Calu3 (cell line): ENCODE measurements at regions of chr11 and their contacts with region 1.

Region 1: GRCh38 chr11:36469063-36469462 is 41.0 kb downstream of the TRAF6 start:
- DNase-seq: no peak
- H3K4me3 Mint-ChIP-seq: no peak overlapping the region
- H3K27ac Mint-ChIP-seq: no peak overlapping the region
- H3K4me1 Mint-ChIP-seq: peaks cover 8% of the 10 kb centered on the region
- H3K27me3 Mint-ChIP-seq: peaks cover 15% of the 10 kb centered on the region
- CTCF ChIP-seq: no peak

Region 2: DNA sequence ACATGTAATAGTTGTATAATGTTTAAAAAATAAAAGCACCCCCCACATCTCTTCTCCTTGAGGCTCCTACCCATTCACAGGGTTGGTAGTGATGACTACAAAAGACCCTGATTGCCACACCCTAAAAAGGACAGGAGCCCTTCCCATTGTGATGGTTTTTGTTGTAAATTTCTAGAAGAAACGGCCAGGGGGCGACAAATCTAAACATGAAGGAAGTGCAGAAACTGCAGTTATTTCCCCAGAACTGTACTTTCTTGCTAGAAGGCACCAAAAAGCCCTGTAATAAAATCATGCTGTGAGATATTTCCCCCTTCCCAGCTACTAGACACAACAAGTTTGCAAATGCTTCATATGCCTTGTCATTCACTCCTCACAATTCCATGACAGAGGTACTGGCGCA is 162.2 kb before region 1 on chr11:
- CTCF ChIA-PET with region 1: no interaction called
- intact Hi-C with region 1: no loop called
- DNase-seq: no peak
- H3K4me3 Mint-ChIP-seq: no peak overlapping the region
- H3K27ac Mint-ChIP-seq: no peak overlapping the region
- H3K4me1 Mint-ChIP-seq: peaks cover 23% of the 10 kb centered on the region
- H3K27me3 Mint-ChIP-seq: peaks cover 8% of the 10 kb centered on the region
- CTCF ChIP-seq: no peak

Region 3: GRCh38 chr11:36443661-36444060 is 25.4 kb before region 1 on chr11:
- CTCF ChIA-PET with region 1: no interaction called
- intact Hi-C with region 1: loop called (anchors 1 kb)
- DNase-seq: no peak
- H3K4me3 Mint-ChIP-seq: no peak overlapping the region
- H3K27ac Mint-ChIP-seq: no peak overlapping the region
- H3K4me1 Mint-ChIP-seq: peaks cover 22% of the 10 kb centered on the region
- H3K27me3 Mint-ChIP-seq: peaks cover 36% of the 10 kb centered on the region
- CTCF ChIP-seq: no peak